HAP-1 (cell line): ENCODE measurements at regions of chr12 and their contacts with region 1.

Region 1: GRCh38 chr12:54005853-54006686 is 2.7 kb upstream of the HOXC8 start:
- DNase-seq: peak; percentile 72 to 94
- H3K4me3 ChIP-seq: peak overlapping the region; percentile 6
- H3K4me1 ChIP-seq: peaks cover 16% of the 10 kb centered on the region
- H3K27me3 ChIP-seq: peaks cover 1% of the 10 kb centered on the region; the same call in 1 of the 2 replicates

Region 2: GRCh38 chr12:53798575-53798974 is 207.5 kb before region 1 on chr12:
- in situ Hi-C with region 1: no loop called
- DNase-seq: no peak
- H3K4me3 ChIP-seq: no peak overlapping the region
- H3K4me1 ChIP-seq: no peaks in the 10 kb centered on the region
- H3K27me3 ChIP-seq: peaks cover 37% of the 10 kb centered on the region

Region 3: GRCh38 chr12:54201001-54201794 is 195.1 kb after region 1 on chr12:
- in situ Hi-C with region 1: loop called (anchors 5 kb)
- DNase-seq: peak; percentile 74 to 88
- H3K4me3 ChIP-seq: no peak overlapping the region
- H3K4me1 ChIP-seq: no peaks in the 10 kb centered on the region
- H3K27me3 ChIP-seq: peaks cover 13% of the 10 kb centered on the region

Region 4: DNA sequence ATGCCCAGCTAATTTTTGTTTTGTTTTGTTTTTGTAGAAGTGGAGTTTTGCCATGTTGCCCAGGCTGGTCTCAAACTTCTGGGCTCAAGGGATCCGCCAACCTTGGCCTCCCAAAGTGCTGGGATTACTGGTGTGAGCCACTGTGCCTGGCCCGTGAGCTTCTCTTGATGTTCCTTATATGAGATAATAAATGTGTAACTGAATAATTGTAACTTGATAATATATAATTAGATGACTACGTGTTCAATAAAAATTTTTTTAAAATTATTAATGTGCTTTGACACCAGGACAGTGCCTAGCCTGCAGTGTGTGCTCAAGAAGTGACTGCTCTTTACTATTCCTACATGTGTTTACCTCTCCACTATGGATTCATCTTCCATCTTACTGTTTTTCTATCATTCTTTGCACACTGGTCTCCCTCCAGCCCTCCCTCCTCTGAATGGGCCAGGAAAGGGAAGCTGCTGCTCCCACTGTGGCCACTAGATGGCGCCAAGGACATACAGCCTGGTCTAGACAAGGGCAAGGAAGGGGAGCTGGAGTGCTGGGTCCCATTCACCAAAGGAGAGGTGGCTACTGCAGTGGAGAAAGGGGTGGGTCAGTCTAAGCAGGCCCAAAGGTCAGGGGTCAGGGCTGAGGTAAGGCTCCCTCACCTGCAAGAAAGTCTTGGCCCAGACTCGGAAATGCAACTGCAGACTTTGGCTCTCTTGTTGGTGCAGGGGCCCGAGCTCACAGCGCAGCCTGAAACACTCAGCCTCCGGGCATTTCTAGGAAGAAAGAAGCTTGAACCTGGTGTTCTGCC is 393.1 kb after region 1 on chr12:
- in situ Hi-C with region 1: no loop called
- DNase-seq: peak; percentile 57 to 89
- H3K4me3 ChIP-seq: no peak overlapping the region
- H3K4me1 ChIP-seq: no peaks in the 10 kb centered on the region
- H3K27me3 ChIP-seq: no peaks in the 10 kb centered on the region